B cell (primary cell): ENCODE measurements at regions of chr10 and their contacts with region 1.

Region 1: DNA sequence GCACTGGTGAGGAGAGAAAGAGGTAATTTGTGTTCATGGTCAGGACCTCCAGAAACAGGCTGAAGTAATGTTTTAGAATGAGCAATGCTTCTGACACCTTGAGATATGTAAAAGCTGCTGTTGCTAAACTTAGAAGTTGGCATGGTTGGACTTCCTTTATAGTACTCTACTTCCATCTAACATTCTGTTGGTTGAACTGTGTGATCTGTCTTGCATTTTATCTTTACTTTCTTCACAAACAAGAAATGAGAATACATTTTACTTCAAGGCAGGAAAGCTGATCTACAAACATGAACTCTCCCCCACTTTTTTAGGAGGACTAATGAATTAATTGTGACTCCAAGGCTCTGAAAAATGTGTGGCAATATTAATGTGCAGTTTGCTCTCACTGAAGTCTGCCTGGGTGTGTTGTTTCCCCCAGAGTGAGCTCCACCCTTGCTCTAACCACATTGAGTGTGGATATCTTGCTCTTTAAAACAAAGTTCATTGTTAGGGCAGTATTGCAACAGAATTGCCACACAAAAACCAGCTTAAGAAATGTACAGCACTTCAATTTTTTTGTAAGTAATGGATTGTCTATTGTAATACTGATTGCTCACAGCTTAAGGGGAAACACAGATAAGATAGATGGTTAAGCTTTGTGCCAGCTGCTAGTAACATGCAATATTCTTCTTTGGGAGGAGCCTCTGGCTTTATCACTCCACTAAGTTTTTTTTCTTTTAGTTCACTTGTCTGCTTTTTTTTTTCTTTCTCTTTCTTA is 69.0 kb downstream of the ADD3 start:
- DNase-seq: peak; percentile 42
- ATAC-seq: peak; percentile 67
- H3K4me3 ChIP-seq: peak overlapping the region; percentile 45 to 69 (median 59)
- H3K4me3 Mint-ChIP-seq: peak overlapping the region; percentile 94
- H3K27ac ChIP-seq: peak overlapping the region; percentile 74 to 86
- H3K27ac Mint-ChIP-seq: peak overlapping the region; percentile 99
- H3K4me1 ChIP-seq: peaks cover 56 to 67% of the 10 kb centered on the region in 2 donors
- H3K4me1 Mint-ChIP-seq: peaks cover 76% of the 10 kb centered on the region
- H3K27me3 ChIP-seq: no peaks in the 10 kb centered on the region
- H3K27me3 Mint-ChIP-seq: no peaks in the 10 kb centered on the region
- CTCF ChIP-seq: no peak

Region 2: DNA sequence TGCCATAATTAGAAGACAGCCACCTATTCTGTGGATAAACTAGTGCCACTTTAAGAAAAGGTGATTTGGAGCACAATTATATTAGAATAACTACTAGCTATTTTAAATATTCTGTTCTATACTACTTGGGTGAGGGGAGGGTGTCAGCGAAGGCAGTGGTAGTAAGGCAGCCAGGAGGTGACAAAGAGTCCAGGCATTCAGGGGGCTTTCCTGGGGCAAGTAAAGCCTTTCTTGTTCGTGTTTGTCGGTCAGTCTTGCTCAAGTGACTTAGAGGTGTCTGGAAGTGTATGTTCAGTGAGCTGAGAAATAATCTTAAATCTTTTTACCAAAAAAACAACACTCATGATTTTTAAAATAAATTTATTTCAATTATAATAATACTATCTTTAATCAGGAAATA is 34.6 kb before region 1 on chr10:
- CTCF ChIA-PET with region 1: interaction called, 3 read pairs
- POLR2A ChIA-PET with region 1: no interaction called
- intact Hi-C with region 1: loop called (anchors 5 kb)
- DNase-seq: no peak
- ATAC-seq: no peak
- H3K4me3 ChIP-seq: no peak overlapping the region
- H3K4me3 Mint-ChIP-seq: no peak overlapping the region
- H3K27ac ChIP-seq: no peak overlapping the region
- H3K27ac Mint-ChIP-seq: no peak overlapping the region
- H3K4me1 ChIP-seq: peaks cover 7 to 9% of the 10 kb centered on the region in 2 donors
- H3K4me1 Mint-ChIP-seq: peaks cover 42% of the 10 kb centered on the region
- H3K27me3 ChIP-seq: no peaks in the 10 kb centered on the region
- H3K27me3 Mint-ChIP-seq: no peaks in the 10 kb centered on the region
- CTCF ChIP-seq: no peak

Region 3: DNA sequence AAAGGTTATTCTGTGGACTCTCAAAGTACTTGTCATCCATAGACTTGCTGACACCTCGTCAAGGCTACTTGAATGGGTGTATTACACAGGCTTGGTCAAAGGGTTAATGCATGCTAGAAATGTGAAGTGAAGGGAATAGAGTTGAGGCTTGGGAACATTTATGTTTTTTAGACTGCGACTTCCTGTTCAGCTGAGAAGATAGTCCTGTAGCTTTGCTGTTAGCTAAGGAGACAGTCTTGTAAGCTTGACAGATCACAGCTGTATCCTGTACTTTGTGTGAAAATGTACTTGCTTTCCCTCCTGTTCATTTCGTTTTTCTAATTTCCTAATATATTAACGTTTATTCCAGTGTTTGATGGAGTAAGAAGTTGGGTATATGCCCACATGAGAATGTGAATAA is 16.8 kb before region 1 on chr10:
- CTCF ChIA-PET with region 1: interaction called, 8 read pairs
- POLR2A ChIA-PET with region 1: interaction called, 4 read pairs
- intact Hi-C with region 1: loop called (anchors 2 kb)
- DNase-seq: peak; percentile 34
- ATAC-seq: peak; percentile 49
- H3K4me3 ChIP-seq: peak overlapping the region in 1 of 5 experiments; percentile 23
- H3K4me3 Mint-ChIP-seq: peak overlapping the region; percentile 68
- H3K27ac ChIP-seq: peak overlapping the region; percentile 20 to 85
- H3K27ac Mint-ChIP-seq: peak overlapping the region; percentile 70
- H3K4me1 ChIP-seq: peaks cover 46 to 59% of the 10 kb centered on the region in 2 donors
- H3K4me1 Mint-ChIP-seq: peaks cover 74% of the 10 kb centered on the region
- H3K27me3 ChIP-seq: no peaks in the 10 kb centered on the region
- H3K27me3 Mint-ChIP-seq: no peaks in the 10 kb centered on the region
- CTCF ChIP-seq: no peak

Region 4: GRCh38 chr10:110252151-110252550 is 175.4 kb after region 1 on chr10:
- CTCF ChIA-PET with region 1: no interaction called
- POLR2A ChIA-PET with region 1: no interaction called
- intact Hi-C with region 1: no loop called
- DNase-seq: no peak
- ATAC-seq: no peak
- H3K4me3 ChIP-seq: no peak overlapping the region
- H3K4me3 Mint-ChIP-seq: no peak overlapping the region
- H3K27ac ChIP-seq: no peak overlapping the region
- H3K27ac Mint-ChIP-seq: no peak overlapping the region
- H3K4me1 ChIP-seq: no peaks in the 10 kb centered on the region
- H3K4me1 Mint-ChIP-seq: no peaks in the 10 kb centered on the region
- H3K27me3 ChIP-seq: no peaks in the 10 kb centered on the region
- H3K27me3 Mint-ChIP-seq: no peaks in the 10 kb centered on the region
- CTCF ChIP-seq: no peak